ENCODE measurements at regions of chr6 and their contacts with region 1.

Region 1: DNA sequence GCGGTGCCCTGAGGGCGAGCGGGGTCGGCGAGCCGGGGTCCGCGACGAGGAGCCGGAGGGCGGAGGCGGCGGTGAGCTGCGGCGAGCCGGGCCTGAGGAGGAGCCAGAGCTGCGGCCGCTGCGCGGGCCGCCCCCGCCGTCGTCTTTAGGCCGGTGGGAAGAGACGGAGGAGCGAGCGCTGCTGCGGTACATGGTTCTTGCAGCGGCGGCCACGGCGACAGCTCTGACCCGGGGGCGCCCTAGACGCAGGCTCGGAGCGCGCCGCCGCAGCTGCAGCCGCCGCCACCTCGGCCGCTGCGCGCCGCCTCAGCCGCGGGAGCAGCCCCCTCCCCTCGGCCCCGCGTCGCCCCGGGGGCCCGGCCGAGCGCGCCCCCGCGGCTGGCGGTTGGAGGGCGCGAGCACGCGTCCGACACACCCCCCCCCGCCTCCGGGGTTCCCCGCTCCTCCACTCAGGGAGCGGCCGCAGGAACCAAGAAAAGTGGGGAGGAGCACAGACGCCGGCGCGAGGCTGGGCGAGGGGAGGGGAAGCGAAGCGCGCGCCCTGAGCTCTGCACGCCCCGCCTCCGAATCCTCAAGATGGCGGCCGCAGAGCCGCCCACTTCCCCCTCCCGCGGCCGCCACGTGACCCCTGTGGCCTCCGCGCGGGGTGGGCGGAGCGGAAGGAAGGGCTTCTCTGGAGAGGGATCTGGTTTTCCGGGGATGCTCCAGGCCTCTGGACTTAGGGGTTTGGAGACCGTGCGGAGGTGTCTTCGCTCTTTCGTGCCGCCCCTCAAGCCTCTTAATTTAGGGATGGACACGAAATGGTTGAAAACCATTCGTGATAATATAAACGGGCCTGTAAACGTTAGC is at the start of gene ZNF318:
- DNase-seq: peak; percentile 88 to 97 (median 92)
- ATAC-seq: peak; percentile 95 to 97 (median 96)
- H3K4me3 ChIP-seq: peak within 1 kb of the TSS; percentile 82 to 84
- H3K4me3 Mint-ChIP-seq: peak within 1 kb of the TSS; percentile 84 to 88 (median 87)
- H3K27ac ChIP-seq: peak within 1 kb of the TSS; percentile 82
- H3K27ac Mint-ChIP-seq: peak within 1 kb of the TSS; percentile 93 to 96
- H3K4me1 ChIP-seq: peaks cover 12 to 38% of the 10 kb centered on the region in 2 experiments
- H3K4me1 Mint-ChIP-seq: peaks cover 42 to 52% (median 51%) of the 10 kb centered on the region in 3 donors
- H3K27me3 ChIP-seq: no peaks in the 10 kb centered on the region
- H3K27me3 Mint-ChIP-seq: no peaks in the 10 kb centered on the region
- total RNA-seq, gene ZNF318: 24.3 to 33.5 (median 26.2) TPM

Region 2: DNA sequence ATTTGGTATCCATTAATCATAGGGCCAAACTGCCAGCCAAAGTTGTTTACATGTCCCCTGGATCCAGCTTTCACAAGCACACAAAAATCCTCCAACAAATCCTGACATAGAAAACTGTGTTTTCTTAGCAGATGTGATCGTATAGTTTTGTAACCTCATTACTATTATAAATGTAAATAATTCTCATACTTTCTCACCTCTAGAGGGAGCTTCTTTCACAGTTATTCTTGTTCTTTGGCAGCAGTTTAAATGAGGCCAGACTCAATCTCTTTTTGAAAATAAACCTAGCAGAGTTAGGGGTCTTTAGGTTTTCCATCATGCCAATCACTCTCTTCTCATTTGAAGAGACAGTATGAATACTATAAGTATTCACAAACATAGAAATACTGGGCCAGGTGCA is 17.1 kb after region 1 on chr6:
- CTCF ChIA-PET with region 1: interaction called, 6 to 53 read pairs
- POLR2A ChIA-PET with region 1: interaction called, 3 to 11 read pairs
- DNase-seq: peak in 1 of 35 experiments; percentile 52
- ATAC-seq: no peak
- H3K4me3 ChIP-seq: no peak overlapping the region
- H3K4me3 Mint-ChIP-seq: no peak overlapping the region
- H3K27ac ChIP-seq: no peak overlapping the region
- H3K27ac Mint-ChIP-seq: peak overlapping the region; percentile 8 to 9
- H3K4me1 ChIP-seq: peaks cover 44 to 51% of the 10 kb centered on the region in 2 experiments
- H3K4me1 Mint-ChIP-seq: peaks cover 67 to 78% (median 72%) of the 10 kb centered on the region in 3 donors
- H3K27me3 ChIP-seq: no peaks in the 10 kb centered on the region
- H3K27me3 Mint-ChIP-seq: peaks cover 0 to 12% of the 10 kb centered on the region in 2 donors

Region 3: DNA sequence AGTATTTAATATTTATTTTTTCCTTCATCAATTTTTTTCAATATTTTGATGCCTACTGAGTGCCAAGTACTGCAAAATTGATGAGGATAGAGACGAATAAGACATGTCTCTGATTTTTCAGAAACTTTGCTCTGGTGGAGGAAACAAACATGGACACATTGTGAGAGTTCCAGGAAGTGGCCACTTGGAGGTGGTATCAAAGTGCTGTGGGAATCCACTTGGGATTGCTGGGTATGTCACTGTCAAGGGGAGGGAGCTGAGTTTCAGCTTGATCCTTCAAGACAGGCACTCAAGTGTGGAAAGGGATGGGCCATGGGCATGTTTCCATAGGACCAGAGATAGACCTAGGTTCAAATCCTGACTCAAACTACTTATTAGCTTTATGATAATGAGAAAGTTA is 33.4 kb after region 1 on chr6:
- CTCF ChIA-PET with region 1: interaction called in 1 of 2 experiments, 13 read pairs
- POLR2A ChIA-PET with region 1: interaction called in 1 of 2 experiments, 3 read pairs
- DNase-seq: no peak
- ATAC-seq: no peak
- H3K4me3 ChIP-seq: no peak overlapping the region
- H3K4me3 Mint-ChIP-seq: no peak overlapping the region
- H3K27ac ChIP-seq: no peak overlapping the region
- H3K27ac Mint-ChIP-seq: no peak overlapping the region
- H3K4me1 ChIP-seq: no peaks in the 10 kb centered on the region
- H3K4me1 Mint-ChIP-seq: peaks cover 0 to 3% (median 2%) of the 10 kb centered on the region in 3 donors
- H3K27me3 ChIP-seq: peaks cover 0 to 3% of the 10 kb centered on the region in 2 experiments
- H3K27me3 Mint-ChIP-seq: peaks cover 24% of the 10 kb centered on the region in 2 donors

Region 4: GRCh38 chr6:43421831-43422230 is 52.4 kb after region 1 on chr6:
- CTCF ChIA-PET with region 1: no interaction called
- POLR2A ChIA-PET with region 1: interaction called in 1 of 2 experiments, 10 read pairs
- DNase-seq: no peak
- ATAC-seq: no peak
- H3K4me3 ChIP-seq: no peak overlapping the region
- H3K4me3 Mint-ChIP-seq: no peak overlapping the region
- H3K27ac ChIP-seq: no peak overlapping the region
- H3K27ac Mint-ChIP-seq: no peak overlapping the region
- H3K4me1 ChIP-seq: peaks cover 0 to 2% of the 10 kb centered on the region in 2 experiments
- H3K4me1 Mint-ChIP-seq: peaks cover 0 to 4% (median under 1%) of the 10 kb centered on the region in 3 donors
- H3K27me3 ChIP-seq: no peaks in the 10 kb centered on the region
- H3K27me3 Mint-ChIP-seq: peaks cover 0 to 2% of the 10 kb centered on the region in 2 donors